GM12878 (cell line): ENCODE measurements at regions of chr2 and their contacts with region 1.

Region 1: GRCh38 chr2:122707224-122707824 is 951.9 kb downstream of the TSN start:
- DNase-seq: peak; percentile 70
- ATAC-seq: peak; percentile 76
- H3K4me3 ChIP-seq: no peak overlapping the region
- H3K27ac ChIP-seq: peak overlapping the region; percentile 58
- H3K4me1 ChIP-seq: peaks cover 4% of the 10 kb centered on the region
- H3K27me3 ChIP-seq: no peaks in the 10 kb centered on the region
- CTCF ChIP-seq: no peak
- EP300 ChIP-seq: peak; percentile 84 to 93; a peak in 3 of 4 replicates
- POLR2A ChIP-seq: no peak
- RAD21 ChIP-seq: no peak

Region 2: GRCh38 chr2:121974897-121975661 is 732.2 kb before region 1 on chr2:
- CTCF ChIA-PET with region 1: no interaction called
- POLR2A ChIA-PET with region 1: no interaction called
- RAD21 ChIA-PET with region 1: no interaction called
- SMC1A ChIA-PET with region 1: no interaction called
- in situ Hi-C with region 1: no loop called
- intact Hi-C with region 1: loop called (anchors 5 kb)
- DNase-seq: peak; percentile 60
- ATAC-seq: peak; percentile 98
- H3K4me3 ChIP-seq: peak overlapping the region; percentile 45; the same call in 1 of the 2 replicates
- H3K27ac ChIP-seq: no peak overlapping the region
- H3K4me1 ChIP-seq: no peaks in the 10 kb centered on the region
- H3K27me3 ChIP-seq: no peaks in the 10 kb centered on the region
- CTCF ChIP-seq: peak; percentile 52 to 75 (median 64); a peak in 5 of 6 replicates
- EP300 ChIP-seq: no peak
- POLR2A ChIP-seq: no peak
- RAD21 ChIP-seq: peak; percentile 76

Region 3: DNA sequence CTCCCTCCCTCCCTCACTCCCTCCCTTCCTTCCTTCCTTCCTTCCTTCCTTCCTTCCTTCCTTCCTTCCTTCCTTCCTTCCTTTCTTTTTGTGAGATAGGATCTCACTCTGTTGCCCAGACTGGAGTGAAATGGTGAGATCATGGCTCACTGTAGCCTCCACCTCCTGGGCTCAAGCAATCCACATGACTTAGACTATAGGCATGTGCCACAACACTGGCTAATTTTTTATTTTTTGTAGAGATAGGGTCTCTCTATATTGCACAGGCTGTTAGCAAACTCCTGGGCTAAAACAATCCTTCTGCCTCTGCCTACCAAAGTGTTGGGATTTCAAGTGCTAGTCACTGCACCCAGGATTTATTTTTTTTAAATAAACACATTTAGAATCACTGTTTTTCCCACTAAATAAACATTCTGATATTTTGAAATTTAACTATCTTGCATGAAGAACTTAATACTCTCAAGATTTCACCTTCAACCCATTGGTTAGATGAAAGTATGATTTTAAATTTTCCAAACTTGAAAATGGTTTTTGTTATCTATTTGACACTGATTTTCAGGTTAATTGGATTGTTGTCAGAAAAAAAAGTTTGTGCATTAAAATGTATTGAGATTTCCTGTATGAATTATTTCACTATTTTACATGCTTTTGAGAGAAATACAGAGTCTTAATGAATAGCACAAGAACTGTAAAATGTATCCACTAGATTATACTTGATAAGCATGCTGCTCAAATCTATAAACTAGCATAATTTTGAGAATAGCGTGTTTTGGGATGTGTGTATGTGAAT is 206.8 kb before region 1 on chr2:
- CTCF ChIA-PET with region 1: no interaction called
- POLR2A ChIA-PET with region 1: no interaction called
- RAD21 ChIA-PET with region 1: no interaction called
- SMC1A ChIA-PET with region 1: no interaction called
- in situ Hi-C with region 1: no loop called
- intact Hi-C with region 1: loop called (anchors 5 kb)
- DNase-seq: no peak
- ATAC-seq: no peak
- H3K4me3 ChIP-seq: no peak overlapping the region
- H3K27ac ChIP-seq: no peak overlapping the region
- H3K4me1 ChIP-seq: no peaks in the 10 kb centered on the region
- H3K27me3 ChIP-seq: no peaks in the 10 kb centered on the region
- CTCF ChIP-seq: no peak
- EP300 ChIP-seq: no peak
- POLR2A ChIP-seq: no peak
- RAD21 ChIP-seq: no peak

Region 4: DNA sequence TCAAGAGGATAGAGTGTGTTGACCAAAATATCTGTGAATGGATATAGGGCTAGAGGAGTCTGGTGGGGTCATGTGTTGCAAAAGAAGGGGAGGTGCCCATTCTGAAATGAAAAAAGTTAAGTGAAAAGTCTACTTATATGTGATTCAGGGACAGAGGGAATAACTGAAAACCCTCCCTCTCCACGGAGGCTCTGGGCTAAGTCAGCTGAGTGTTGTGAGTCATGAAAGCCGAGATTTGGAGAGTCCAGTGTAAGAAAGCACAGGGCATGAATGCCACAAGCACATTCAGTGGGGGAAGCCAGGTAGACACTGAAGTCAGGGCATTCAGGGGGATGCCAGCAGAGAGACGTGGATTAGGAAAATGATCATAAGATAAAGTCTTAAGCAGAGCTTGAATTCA is 79.9 kb before region 1 on chr2:
- CTCF ChIA-PET with region 1: no interaction called
- POLR2A ChIA-PET with region 1: no interaction called
- RAD21 ChIA-PET with region 1: no interaction called
- SMC1A ChIA-PET with region 1: no interaction called
- in situ Hi-C with region 1: no loop called
- intact Hi-C with region 1: no loop called
- DNase-seq: no peak
- ATAC-seq: no peak
- H3K4me3 ChIP-seq: no peak overlapping the region
- H3K27ac ChIP-seq: no peak overlapping the region
- H3K4me1 ChIP-seq: no peaks in the 10 kb centered on the region
- H3K27me3 ChIP-seq: no peaks in the 10 kb centered on the region
- CTCF ChIP-seq: no peak
- EP300 ChIP-seq: no peak
- POLR2A ChIP-seq: no peak
- RAD21 ChIP-seq: no peak

Region 5: DNA sequence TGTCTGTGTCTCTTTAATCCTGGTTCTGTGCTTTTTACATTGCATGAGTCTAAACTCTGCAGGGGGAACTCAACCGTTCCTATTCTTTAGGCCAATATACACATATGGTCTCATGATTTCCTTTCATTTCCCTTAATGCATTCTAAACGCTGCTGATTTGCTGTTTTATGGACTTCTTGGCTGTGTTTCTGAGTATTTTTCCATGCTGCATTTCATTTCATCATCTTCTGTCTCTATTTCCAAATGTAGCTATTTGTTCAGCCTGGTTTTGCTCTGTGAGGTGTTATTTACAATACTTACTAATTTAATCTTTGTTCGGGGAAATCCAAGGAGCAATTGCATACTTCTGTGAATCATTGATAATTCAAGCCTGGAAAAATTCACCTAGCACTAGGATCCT is 54.7 kb before region 1 on chr2:
- CTCF ChIA-PET with region 1: interaction called, 3 read pairs
- POLR2A ChIA-PET with region 1: interaction called, 3 read pairs
- RAD21 ChIA-PET with region 1: interaction called, 14 read pairs
- SMC1A ChIA-PET with region 1: interaction called, 7 read pairs
- in situ Hi-C with region 1: no loop called
- intact Hi-C with region 1: no loop called
- DNase-seq: no peak
- ATAC-seq: peak; percentile 37; the same call in 1 of the 3 replicates
- H3K4me3 ChIP-seq: no peak overlapping the region
- H3K27ac ChIP-seq: no peak overlapping the region
- H3K4me1 ChIP-seq: no peaks in the 10 kb centered on the region
- H3K27me3 ChIP-seq: no peaks in the 10 kb centered on the region
- CTCF ChIP-seq: no peak
- EP300 ChIP-seq: no peak
- POLR2A ChIP-seq: no peak
- RAD21 ChIP-seq: no peak

Region 6: DNA sequence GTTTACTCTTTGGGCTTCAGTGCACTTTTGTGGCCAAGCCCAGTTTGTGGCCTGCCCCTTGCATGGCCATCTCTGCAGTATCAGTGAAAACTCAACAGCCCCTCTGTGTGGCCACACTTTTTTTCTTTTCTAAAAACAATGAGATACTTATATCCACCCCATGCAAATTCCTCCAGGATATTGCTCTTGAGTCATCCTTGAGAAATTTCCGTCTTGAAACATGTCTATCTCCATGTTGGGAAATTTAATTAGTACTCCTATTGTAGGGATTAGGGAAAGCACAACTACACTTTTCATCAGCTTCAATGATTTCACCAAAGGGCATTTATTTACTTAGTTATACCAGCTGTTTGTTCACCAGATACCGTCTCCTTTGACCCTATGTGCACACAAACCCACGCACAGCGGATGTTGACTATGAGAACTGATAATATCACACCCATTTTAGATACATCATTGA is 41.3 kb after region 1 on chr2:
- CTCF ChIA-PET with region 1: interaction called, 16 read pairs
- POLR2A ChIA-PET with region 1: interaction called, 9 read pairs
- RAD21 ChIA-PET with region 1: interaction called, 40 read pairs
- SMC1A ChIA-PET with region 1: interaction called, 22 read pairs
- in situ Hi-C with region 1: no loop called
- intact Hi-C with region 1: no loop called
- DNase-seq: no peak
- ATAC-seq: peak; percentile 55
- H3K4me3 ChIP-seq: no peak overlapping the region
- H3K27ac ChIP-seq: no peak overlapping the region
- H3K4me1 ChIP-seq: no peaks in the 10 kb centered on the region
- H3K27me3 ChIP-seq: no peaks in the 10 kb centered on the region
- CTCF ChIP-seq: peak in 1 of 3 experiments; percentile 34; a peak in 2 of 6 replicates
- EP300 ChIP-seq: no peak
- POLR2A ChIP-seq: no peak
- RAD21 ChIP-seq: peak; percentile 51; the same call in 1 of the 2 replicates

Region 7: DNA sequence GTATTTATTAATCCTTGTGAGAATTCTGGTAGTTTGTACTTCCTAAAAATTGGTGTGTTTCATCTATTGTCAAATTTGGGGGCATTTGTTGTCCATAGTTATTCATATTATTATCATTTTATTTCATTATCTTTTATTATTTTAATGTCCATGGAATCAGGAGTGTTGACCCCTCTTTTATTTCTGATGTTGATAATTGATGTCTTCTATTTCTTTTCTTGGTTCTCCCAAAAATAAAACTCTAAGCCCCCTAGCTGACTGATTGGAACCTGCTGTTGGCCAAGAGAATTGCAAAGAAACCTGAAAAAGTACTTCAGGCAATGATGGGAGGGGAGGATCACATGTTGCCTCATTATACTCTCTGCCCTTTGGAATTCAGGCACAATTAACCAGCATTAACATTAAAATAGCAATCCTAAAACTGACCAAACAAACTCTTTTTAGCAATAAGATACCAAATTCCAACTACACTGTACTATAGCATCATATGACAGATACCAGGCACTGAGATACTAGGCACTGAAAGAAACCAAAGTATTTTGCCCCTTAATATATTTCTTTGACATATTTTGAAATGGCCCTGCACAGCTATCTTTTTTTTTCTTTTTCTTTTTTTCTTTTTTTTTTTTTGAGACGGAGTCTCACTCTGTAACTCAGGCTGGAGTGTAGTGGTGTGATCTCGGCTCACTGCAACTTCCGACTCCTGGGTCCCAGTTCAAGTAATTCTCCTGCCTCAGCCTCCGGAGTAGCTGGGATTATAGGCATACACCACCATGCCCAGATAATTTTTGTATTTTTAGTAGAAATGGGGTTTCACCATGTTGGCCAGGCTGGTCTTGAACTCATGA is 220.6 kb after region 1 on chr2:
- CTCF ChIA-PET with region 1: no interaction called
- POLR2A ChIA-PET with region 1: no interaction called
- RAD21 ChIA-PET with region 1: no interaction called
- SMC1A ChIA-PET with region 1: no interaction called
- in situ Hi-C with region 1: no loop called
- intact Hi-C with region 1: no loop called
- DNase-seq: no peak
- ATAC-seq: no peak
- H3K4me3 ChIP-seq: no peak overlapping the region
- H3K27ac ChIP-seq: no peak overlapping the region
- H3K4me1 ChIP-seq: no peaks in the 10 kb centered on the region
- H3K27me3 ChIP-seq: no peaks in the 10 kb centered on the region
- CTCF ChIP-seq: no peak
- EP300 ChIP-seq: no peak
- POLR2A ChIP-seq: no peak
- RAD21 ChIP-seq: no peak